Posterior cingulate gyrus (tissue), 11 donors: ENCODE measurements at regions of chr17 and their contacts with region 1.

Region 1: GRCh38 chr17:4733073-4733531 is 1.9 kb downstream of the MED11 start:
- DNase-seq: peak in 1 of 10 donors; percentile 66

Region 2: DNA sequence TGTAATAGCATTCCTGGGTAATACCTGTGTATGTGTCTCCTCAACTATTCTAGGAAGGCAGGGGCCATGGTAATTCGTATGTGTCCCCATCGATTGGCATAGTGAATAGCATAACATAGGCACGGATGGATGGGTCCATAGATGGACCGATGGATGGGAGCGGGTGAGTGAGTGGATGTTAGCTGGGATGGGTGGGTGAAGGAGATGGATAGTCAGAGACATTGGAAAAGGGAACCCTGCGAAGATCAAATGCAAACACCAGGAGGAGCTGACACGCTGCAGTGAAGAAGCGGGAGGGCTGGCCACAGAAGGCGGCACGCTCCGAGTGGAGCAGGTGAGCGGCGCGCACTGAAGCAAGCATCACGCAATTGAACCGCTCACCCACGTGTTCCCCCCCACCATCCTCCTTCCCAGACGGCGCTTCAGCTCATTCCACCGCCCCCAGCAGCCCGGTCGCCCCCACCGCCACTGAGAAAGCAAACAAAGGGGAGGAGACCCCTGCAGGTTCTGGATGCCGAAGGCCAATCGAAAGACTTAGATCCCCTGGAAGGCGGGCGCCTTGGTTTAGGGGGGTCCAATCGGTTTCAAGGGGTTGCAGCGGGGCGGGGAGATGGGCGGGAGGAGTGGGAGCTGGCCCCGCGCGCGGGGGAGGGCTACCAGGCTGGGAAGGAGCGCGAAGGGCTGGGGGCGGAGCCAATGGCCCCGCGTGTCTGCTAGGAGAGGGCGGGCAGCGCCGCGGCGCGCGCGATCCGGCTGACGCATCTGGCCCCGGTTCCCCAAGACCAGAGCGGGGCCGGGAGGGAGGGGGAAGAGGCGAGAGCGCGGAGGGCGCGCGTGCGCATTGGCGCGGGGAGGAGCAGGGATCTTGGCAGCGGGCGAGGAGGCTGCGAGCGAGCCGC is 23.1 kb before region 1 on chr17 and contains the start of gene ARRB2:
- intact Hi-C with region 1: loop called (anchors 1 kb)
- DNase-seq: peak; percentile 95 to 100 (median 99)

Region 3: DNA sequence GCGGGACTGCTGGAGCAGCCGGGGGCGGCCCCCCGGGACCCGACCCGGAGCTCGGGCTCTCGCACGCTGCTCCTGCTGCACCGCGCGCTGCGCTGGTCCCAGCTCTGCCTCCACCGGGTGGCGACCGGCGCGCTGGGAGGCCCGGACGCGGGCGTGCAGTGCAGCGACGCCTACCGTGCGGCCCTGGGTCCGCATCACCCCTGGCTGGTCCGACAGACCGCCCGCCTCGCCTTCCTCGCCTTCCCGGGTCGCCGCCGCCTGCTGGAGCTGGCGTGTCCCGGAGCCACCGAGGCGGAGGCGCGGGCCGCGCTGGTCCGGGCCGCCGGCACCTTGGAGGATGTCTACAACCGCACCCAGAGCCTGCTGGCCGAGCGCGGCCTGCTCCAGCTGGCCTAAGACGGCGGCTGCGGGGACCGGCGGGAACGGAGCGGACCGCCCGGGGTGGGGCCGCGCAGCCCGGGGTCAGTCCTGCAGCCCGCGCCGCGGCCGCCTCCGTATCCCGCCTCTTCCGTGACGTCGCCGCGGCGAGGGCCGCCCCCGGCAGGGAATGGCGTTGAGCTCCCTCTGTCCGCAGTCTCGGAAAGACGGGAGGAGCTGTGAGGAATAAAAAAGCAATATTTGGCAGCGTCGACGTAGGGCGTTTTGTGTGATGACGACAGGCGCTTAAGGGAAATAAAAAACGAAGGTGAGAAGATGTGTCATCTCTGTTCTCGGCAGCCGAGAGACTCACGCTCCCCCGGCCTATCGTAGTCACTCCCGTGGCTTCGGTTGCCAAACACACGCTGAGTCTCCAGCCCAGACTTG is 57.0 kb after region 1 on chr17:
- intact Hi-C with region 1: loop called (anchors 5 kb)
- DNase-seq: peak; percentile 72 to 97 (median 86)

Region 4: DNA sequence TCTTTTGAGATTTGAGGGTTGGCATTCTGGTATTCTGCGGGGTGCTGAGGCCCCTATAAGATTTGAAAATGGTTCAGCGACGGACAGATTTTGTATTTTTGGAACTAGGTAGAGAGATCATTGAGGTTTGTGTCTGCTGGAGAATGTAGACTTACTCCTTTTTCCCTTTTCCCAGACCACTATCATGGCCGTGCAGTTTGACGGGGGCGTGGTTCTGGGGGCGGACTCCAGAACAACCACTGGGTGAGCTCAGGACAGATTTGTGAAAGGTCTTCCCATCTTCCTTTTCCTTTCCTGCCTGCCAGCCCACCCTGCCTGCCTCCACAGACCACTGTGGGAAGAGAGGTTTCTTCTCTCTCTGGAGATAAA is 63.4 kb after region 1 on chr17:
- intact Hi-C with region 1: loop called (anchors 2 kb)
- DNase-seq: peak in 1 of 10 donors; percentile 79

Region 5: GRCh38 chr17:4891411-4892342 is 158.6 kb after region 1 on chr17:
- intact Hi-C with region 1: loop called (anchors 5 kb)
- DNase-seq: peak in 2 of 10 donors; percentile 59 to 80

Region 6: DNA sequence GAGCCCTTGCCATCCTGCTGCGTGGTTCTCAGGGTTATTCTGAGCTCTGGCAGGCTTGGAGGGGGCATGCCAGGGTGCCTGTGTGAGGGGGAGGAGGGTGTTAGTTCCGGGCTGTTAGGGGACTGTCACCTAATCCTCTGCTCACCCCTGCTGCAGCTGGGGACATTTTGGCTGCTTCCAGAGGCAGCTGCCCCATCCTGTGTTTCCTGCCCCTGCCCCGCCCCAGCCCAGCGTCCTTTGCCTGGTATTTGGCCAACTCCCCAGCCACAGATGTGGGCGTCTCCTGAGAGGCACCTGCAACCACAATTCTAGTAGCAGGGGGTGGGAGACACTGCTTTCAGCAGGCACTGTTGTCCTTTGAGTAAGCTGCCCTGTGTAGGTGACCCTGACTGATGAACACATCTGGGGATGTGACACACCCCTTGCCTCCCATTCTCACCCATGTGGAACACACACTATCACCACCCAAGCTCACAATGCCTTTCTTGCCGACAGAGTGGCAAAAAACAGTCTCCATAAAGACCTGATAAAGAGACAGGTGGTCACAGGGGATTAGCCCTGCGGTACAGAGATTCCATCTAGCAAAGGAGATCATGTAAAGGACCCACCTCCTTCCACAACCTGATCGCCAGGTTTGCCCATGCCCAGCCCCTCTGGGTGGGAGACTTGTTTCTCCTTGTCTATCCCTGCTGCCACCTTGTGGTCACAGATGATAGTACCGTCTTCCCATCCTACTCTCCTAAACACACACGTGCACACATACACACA is 170.1 kb after region 1 on chr17 and contains the start of gene CHRNE:
- intact Hi-C with region 1: loop called (anchors 5 kb)
- DNase-seq: peak in 8 of 10 donors; percentile 36 to 87 (median 78)

Region 7: DNA sequence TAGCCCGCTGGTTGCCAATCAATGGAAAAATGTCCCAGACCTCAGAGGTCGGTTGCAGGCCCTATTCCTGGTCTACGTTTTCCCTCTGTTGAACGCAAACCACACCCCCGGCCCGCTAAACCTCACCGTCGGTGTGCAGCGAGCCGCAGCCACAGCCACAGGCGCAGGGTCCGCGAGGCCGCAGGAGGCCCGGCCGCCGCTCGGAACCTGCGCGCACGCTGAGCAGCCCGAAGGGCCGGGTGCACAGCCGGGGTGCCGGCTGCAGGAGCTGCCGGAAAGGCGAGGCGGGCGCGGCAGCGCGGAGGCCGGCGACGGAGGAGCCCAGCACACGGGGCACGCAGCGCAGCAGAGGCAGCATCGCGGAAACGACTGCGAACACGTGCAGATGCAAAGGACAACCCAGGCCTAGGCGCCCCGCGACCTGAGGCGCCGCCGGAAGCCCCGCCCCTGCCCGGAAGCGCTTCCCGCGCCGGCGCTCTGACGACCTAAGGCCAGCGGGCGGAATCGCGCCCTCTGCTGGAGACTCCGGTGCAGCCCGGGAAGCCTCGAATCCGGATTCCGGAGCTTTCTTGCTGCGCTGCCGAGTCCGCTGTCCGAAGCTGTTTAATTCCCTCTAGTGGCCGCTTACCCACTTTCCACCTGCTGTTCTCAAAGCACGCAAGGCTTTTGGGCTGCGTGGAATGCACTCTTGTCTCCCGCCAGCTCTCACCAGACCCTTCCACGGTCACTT is 705.8 kb after region 1 on chr17 and contains the start of gene C1QBP:
- intact Hi-C with region 1: no loop called
- DNase-seq: peak; percentile 84 to 99 (median 90)